ENCODE measurements at regions of chr13 and their contacts with region 1.

Region 1: GRCh38 chr13:99176309-99177276 is 24.1 kb upstream of the UBAC2 start:
- DNase-seq: peak; percentile 44
- H3K4me3 ChIP-seq: no peak overlapping the region
- H3K27ac ChIP-seq: no peak overlapping the region
- H3K4me1 ChIP-seq: no peaks in the 10 kb centered on the region
- H3K27me3 ChIP-seq: no peaks in the 10 kb centered on the region
- CTCF ChIP-seq: peak; percentile 93 to 97

Region 2: GRCh38 chr13:99218969-99219368 is 42.4 kb after region 1 on chr13:
- CTCF ChIA-PET with region 1: no interaction called
- dilution Hi-C with region 1: loop called (anchors 5 kb)
- in situ Hi-C with region 1: no loop called
- intact Hi-C with region 1: no loop called
- DNase-seq: no peak
- H3K4me3 ChIP-seq: no peak overlapping the region
- H3K27ac ChIP-seq: no peak overlapping the region
- H3K4me1 ChIP-seq: peaks cover 5% of the 10 kb centered on the region
- H3K27me3 ChIP-seq: no peaks in the 10 kb centered on the region
- CTCF ChIP-seq: no peak

Region 3: GRCh38 chr13:99264051-99264450 is 87.5 kb after region 1 on chr13:
- CTCF ChIA-PET with region 1: interaction called, 9 read pairs
- dilution Hi-C with region 1: loop called (anchors 5 kb)
- in situ Hi-C with region 1: loop called (anchors 10 kb)
- intact Hi-C with region 1: loop called (anchors 1 kb)
- DNase-seq: no peak
- H3K4me3 ChIP-seq: no peak overlapping the region
- H3K27ac ChIP-seq: no peak overlapping the region
- H3K4me1 ChIP-seq: no peaks in the 10 kb centered on the region
- H3K27me3 ChIP-seq: no peaks in the 10 kb centered on the region
- CTCF ChIP-seq: no peak

Region 4: GRCh38 chr13:99436686-99437416 is 260.3 kb after region 1 on chr13:
- CTCF ChIA-PET with region 1: no interaction called
- dilution Hi-C with region 1: no loop called
- in situ Hi-C with region 1: loop called (anchors 5 to 10 kb)
- intact Hi-C with region 1: loop called (anchors 1 kb)
- DNase-seq: peak; percentile 68
- H3K4me3 ChIP-seq: peak overlapping the region in 1 of 3 experiments; percentile 18
- H3K27ac ChIP-seq: no peak overlapping the region
- H3K4me1 ChIP-seq: peaks cover 10% of the 10 kb centered on the region
- H3K27me3 ChIP-seq: no peaks in the 10 kb centered on the region
- CTCF ChIP-seq: peak; percentile 99 to 100

Measured in mammary epithelial cell (primary cell).